AG04449 (cell line): ENCODE measurements at regions of chr2 and their contacts with region 1.

Region 1: DNA sequence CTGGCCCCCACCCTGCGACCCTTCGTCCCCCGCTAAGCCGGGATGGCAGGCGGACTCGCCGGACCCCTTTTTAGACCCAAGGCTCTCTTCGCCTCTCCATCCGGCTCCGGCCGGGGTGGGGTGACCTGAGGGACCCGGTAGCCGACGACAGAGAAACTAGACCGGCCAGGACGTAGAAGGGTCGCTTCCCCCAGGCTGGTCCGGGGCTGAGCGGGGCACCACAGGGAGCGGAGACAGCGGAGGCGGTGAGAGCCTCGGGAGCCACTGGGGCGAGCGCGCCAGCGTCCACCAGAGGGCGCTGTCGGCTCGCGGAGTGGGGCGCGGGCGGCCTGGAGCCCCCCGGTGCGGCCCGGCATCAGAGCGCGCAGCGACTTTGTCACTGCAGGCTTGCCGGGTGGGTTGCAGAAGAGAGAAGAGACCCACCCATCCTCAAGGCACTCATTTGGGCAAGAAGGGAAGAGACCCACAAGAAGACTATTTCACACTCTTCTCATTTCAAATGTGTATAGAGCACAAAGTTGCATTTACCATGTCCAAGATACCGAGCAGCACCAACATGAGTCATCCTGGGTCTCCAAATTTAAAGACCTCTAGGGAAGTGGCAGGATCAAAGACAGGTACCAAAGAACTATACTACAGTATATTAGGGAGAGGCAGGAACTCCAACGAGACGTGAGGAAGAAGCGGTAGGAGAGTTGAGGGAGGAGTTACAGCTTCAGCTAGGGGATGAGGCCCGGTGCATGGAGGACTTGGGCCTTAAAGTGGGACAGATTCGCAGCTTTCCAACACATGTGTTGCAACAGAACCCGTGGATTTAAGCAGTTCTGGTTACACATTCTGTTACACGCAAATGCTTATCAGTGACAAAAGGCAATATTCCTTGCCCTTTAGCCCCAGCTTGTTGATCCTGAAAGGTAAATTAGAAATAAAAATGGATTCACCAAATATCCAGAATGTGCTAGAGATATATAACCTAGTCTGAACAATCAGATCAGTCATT is 7.6 kb upstream of the PRKCE start:
- DNase-seq: no peak
- H3K4me3 ChIP-seq: peak overlapping the region; percentile 64
- CTCF ChIP-seq: peak; percentile 83

Region 2: DNA sequence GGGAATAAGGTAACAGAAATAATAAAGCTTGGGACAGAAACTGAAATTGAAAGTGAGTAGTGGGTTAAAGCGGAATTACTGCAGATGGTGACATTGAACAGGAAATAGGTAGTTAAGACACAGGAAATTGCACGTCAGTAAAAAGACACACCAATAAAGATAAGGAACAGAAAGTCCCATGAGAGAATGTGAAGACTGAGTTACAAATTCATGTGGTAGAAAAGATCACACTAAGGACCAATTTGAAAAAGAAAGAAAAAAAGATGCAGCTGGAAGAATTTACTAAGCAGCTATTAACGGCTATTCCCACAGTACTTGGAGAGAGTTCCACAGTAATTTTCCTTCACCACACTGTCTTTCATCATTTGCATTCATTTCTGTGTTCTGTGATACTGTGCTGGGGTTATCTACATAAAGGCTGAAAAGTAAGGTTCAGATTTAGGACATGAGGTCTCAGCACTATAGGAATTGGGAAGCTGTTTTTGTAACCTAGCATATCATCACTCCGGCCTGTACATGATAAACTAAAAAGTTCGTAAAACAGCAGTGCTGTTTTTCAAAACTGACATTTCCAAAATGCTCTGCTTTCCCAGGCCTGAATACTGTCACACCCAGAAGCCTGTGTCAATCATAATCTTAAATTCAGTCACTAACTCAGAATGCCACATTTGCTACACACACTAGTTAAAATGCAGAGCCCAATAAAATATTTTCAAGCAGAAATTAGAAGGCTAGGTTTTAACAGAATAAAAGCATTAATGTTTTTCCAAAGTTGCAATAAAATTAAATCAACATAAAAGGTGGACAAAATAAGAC is 75.7 kb before region 1 on chr2:
- CTCF ChIA-PET with region 1: no interaction called
- POLR2A ChIA-PET with region 1: no interaction called
- DNase-seq: no peak
- H3K4me3 ChIP-seq: no peak overlapping the region
- CTCF ChIP-seq: no peak

Region 3: GRCh38 chr2:45813003-45813941 is 169.4 kb after region 1 on chr2:
- CTCF ChIA-PET with region 1: no interaction called
- POLR2A ChIA-PET with region 1: no interaction called
- DNase-seq: no peak
- H3K4me3 ChIP-seq: no peak overlapping the region
- CTCF ChIP-seq: no peak

Region 4: DNA sequence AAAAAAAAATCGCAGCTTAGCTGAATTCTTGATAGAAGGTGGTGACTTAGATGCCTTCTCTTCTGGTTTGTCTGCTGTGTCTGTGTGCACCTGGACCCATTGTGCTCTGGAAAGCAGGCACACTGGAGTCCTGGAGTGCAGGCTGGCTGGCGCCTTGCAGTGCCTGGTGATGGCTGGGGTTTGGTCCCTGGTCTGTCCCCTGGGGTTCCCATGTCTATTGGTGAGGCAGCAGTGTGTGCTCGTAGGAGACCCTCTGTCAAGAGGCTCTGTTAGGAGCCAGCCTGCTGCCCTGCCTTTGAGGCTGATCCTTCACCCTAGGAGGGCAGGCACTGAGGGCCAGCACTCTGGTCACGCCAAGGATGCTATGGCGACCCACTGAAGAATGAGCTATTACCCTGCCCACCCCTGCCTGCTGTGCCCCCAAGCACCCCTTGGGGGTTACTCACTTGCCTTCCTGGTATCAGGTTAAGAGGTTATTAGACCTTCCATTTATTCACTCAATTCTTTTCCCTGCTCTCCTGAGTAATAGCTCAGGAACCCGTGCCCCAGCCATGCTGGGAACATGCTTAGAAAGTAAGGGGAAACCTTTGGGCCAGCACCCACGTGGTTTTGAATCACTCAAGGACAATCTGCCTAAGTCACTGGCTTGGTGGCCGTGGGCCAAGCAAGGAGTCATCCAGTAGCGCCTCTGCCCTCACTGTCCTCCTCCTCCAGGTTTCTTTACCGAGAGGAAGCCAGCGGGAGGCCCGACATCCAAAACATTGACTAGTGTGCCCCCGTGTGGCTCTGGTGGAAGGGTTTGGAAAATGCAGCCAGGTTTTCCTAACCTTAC is 292.2 kb after region 1 on chr2:
- CTCF ChIA-PET with region 1: interaction called, 72 read pairs
- POLR2A ChIA-PET with region 1: no interaction called
- DNase-seq: peak; percentile 91
- H3K4me3 ChIP-seq: no peak overlapping the region
- CTCF ChIP-seq: peak; percentile 81

Region 5: DNA sequence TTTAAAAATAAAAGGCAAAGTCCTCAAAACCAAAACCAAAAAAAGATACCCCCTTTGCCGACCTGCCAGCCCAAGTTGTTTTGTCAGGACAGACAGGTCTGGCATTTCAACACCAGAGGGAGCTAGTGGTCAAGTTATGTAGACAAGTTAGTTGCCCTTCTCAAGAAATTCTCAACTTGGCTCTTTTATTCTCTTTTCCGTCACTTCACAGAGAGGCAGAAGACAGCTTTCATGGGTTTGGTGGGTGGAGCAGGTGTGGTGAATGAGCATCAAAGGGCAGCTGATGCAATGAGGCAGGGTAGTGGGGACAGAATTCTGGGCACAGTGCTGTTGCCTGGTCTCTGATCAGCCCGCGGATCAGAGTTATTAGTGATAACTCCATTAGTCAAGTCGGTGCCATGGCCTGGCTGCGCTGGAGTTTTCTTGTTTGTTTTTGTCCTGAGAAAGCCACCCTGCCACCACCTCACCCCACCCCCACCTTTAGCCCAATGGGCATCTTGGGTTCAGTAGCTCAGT is 349.7 kb after region 1 on chr2:
- CTCF ChIA-PET with region 1: interaction called, 14 read pairs
- POLR2A ChIA-PET with region 1: interaction called, 3 read pairs
- DNase-seq: no peak
- H3K4me3 ChIP-seq: no peak overlapping the region
- CTCF ChIP-seq: peak; percentile 70